Activated CD4-positive, alpha-beta T cell treated with anti-CD3 and anti-CD28 coated beads for 36 hours (primary cell): ENCODE measurements at regions of chr15 and their contacts with region 1.

Region 1: DNA sequence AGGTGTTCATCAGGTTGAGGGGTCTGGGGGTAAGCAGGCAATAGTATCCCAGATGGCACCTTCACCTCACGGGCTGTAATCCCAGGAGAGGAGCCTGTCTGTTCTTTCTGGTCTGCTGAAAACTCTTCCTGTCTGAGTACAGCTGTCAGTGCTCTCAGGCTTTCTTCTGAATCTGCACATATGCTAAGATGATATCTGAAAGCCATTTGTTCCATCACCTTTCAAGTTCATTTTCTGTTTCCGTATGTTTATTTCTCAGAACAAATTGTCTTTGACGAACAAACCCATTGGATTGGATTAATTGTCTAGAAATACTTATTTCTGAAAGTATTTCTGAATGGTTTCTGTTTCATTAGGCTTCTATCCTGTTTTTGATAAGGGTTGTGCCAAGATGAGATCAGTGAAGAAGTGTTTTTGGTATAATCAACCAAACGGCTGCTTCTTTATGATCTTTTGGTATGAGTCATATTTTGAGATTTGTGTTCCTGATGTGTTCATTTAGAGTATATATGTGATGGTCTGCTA is 13.3 kb downstream of the ZNF592 start:
- DNase-seq: peak; percentile 28
- ATAC-seq: peak; percentile 83
- H3K4me3 Mint-ChIP-seq: no peak overlapping the region
- H3K27ac Mint-ChIP-seq: no peak overlapping the region
- H3K4me1 Mint-ChIP-seq: peaks cover 14% of the 10 kb centered on the region
- H3K27me3 Mint-ChIP-seq: no peaks in the 10 kb centered on the region

Region 2: DNA sequence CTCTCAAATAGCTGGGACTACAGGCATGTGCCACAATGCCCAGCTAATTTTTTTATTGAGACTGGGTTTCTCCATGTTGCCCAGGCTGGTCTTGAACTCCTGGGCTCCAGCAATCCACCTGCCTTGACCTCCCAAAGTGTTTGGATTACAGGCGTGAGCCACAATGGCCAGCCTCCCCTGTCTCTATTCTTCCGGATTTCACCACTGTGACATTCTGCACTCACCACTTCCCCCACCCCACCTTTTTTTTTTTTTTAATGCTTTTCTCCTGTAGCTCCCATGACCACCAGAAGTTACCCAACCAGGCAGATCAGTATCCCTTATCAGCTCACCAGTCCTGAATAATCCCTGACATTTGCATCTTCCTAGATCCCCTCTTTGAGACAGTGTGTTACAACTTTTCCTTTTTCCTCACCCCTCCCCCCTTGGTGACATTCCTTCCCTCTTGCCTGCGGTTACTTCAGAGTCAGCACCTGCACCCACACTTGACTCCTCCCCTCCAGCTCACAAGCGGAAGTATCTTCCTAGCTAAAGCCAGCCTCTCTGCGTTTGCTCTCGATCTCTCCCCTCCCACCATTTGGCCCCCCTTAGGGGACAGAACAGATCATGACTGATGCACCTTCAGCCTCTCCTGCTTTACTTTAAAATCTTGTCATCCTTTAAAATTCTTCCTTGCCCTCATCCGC is 26.7 kb before region 1 on chr15:
- CTCF ChIA-PET with region 1: no interaction called
- POLR2A ChIA-PET with region 1: interaction called, 3 read pairs
- intact Hi-C with region 1: loop called (anchors 1 kb)
- DNase-seq: peak; percentile 87
- ATAC-seq: peak; percentile 72
- H3K4me3 Mint-ChIP-seq: peak overlapping the region; percentile 59
- H3K27ac Mint-ChIP-seq: peak overlapping the region; percentile 97
- H3K4me1 Mint-ChIP-seq: peaks cover 63% of the 10 kb centered on the region
- H3K27me3 Mint-ChIP-seq: no peaks in the 10 kb centered on the region

Region 3: GRCh38 chr15:85073556-85074194 is 312.0 kb after region 1 on chr15:
- CTCF ChIA-PET with region 1: no interaction called
- POLR2A ChIA-PET with region 1: no interaction called
- intact Hi-C with region 1: no loop called
- DNase-seq: peak; percentile 58
- ATAC-seq: peak; percentile 100
- H3K4me3 Mint-ChIP-seq: peak overlapping the region; percentile 26
- H3K27ac Mint-ChIP-seq: peak overlapping the region; percentile 89
- H3K4me1 Mint-ChIP-seq: peaks cover 18% of the 10 kb centered on the region
- H3K27me3 Mint-ChIP-seq: no peaks in the 10 kb centered on the region